ENCODE measurements at regions of chr9 and their contacts with region 1.

Region 1: DNA sequence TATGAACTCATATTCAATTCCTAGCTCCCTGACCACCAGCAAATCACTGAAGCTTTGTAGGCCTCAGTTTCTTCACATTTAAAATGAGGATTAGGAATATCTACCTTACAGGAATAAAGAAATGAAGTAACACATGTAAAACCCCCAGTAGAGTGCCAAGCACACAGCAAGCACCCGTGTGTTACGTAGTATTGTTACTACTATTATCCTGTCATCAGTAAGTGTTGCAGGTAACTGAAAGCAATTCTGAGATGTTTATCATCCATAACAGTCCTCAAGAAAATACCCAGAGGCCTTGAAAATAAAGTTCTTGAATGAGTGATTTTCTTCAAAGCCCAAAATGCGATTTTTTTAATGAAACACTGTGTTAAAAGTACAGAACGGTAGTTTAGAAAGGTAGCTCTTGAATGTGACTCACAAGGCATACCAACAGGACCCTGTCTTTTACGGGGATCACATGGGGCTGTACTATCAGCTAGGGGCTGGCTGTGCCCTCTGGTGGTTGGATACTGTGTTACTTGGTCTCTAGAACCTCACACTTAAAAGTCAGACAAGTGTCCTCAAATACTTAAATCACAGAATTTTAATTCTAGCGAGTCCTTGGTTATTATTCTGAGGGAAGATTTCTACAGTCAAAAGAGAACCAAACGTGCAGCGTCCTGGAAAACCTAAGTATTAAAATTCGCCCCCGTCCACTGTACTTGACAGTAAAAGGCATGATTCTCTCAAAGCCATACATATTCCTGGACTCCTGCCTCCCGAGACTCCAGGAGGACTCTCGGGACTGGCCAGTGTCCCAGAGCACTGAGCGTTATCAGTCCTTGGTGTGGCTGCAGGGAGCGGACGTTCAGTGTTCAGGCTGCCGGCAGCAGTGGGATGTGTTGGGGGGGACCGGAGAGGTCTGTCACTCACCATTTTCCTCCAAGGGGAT is 725 bp downstream of the NDUFB6 start:
- DNase-seq: peak; percentile 70
- ATAC-seq: peak; percentile 92
- H3K4me3 ChIP-seq: peak overlapping the region; percentile 97
- H3K27ac ChIP-seq: peak overlapping the region; percentile 55
- H3K4me1 ChIP-seq: peaks cover 17% of the 10 kb centered on the region
- H3K27me3 ChIP-seq: no peaks in the 10 kb centered on the region
- CTCF ChIP-seq: peak; percentile 77

Region 2: GRCh38 chr9:32326146-32326545 is 246.1 kb before region 1 on chr9:
- CTCF ChIA-PET with region 1: no interaction called
- POLR2A ChIA-PET with region 1: no interaction called
- intact Hi-C with region 1: no loop called
- DNase-seq: no peak
- ATAC-seq: no peak
- H3K4me3 ChIP-seq: no peak overlapping the region
- H3K27ac ChIP-seq: no peak overlapping the region
- H3K4me1 ChIP-seq: no peaks in the 10 kb centered on the region
- H3K27me3 ChIP-seq: peaks cover 24% of the 10 kb centered on the region; the same call in 1 of the 2 replicates
- CTCF ChIP-seq: no peak

Region 3: GRCh38 chr9:32431940-32432555 is 140.2 kb before region 1 on chr9:
- CTCF ChIA-PET with region 1: no interaction called
- POLR2A ChIA-PET with region 1: no interaction called
- intact Hi-C with region 1: loop called (anchors 5 kb)
- DNase-seq: peak; percentile 36
- ATAC-seq: peak; percentile 82
- H3K4me3 ChIP-seq: no peak overlapping the region
- H3K27ac ChIP-seq: no peak overlapping the region
- H3K4me1 ChIP-seq: peaks cover 25% of the 10 kb centered on the region
- H3K27me3 ChIP-seq: no peaks in the 10 kb centered on the region
- CTCF ChIP-seq: peak; percentile 63

Region 4: GRCh38 chr9:32526041-32526706 is 46.1 kb before region 1 on chr9 and contains the start of gene RIGI:
- CTCF ChIA-PET with region 1: interaction called, 11 read pairs
- POLR2A ChIA-PET with region 1: no interaction called
- intact Hi-C with region 1: loop called (anchors 2 kb)
- DNase-seq: peak; percentile 87
- ATAC-seq: peak; percentile 88
- H3K4me3 ChIP-seq: peak within 1 kb of the TSS; percentile 92
- H3K27ac ChIP-seq: peak within 1 kb of the TSS; percentile 78
- H3K4me1 ChIP-seq: peaks cover 7% of the 10 kb centered on the region; the same call in 1 of the 2 replicates
- H3K27me3 ChIP-seq: no peaks in the 10 kb centered on the region
- CTCF ChIP-seq: peak; percentile 63
- total RNA-seq, gene RIGI: 2.6 and 5.4 TPM in 2 replicates

Region 5: DNA sequence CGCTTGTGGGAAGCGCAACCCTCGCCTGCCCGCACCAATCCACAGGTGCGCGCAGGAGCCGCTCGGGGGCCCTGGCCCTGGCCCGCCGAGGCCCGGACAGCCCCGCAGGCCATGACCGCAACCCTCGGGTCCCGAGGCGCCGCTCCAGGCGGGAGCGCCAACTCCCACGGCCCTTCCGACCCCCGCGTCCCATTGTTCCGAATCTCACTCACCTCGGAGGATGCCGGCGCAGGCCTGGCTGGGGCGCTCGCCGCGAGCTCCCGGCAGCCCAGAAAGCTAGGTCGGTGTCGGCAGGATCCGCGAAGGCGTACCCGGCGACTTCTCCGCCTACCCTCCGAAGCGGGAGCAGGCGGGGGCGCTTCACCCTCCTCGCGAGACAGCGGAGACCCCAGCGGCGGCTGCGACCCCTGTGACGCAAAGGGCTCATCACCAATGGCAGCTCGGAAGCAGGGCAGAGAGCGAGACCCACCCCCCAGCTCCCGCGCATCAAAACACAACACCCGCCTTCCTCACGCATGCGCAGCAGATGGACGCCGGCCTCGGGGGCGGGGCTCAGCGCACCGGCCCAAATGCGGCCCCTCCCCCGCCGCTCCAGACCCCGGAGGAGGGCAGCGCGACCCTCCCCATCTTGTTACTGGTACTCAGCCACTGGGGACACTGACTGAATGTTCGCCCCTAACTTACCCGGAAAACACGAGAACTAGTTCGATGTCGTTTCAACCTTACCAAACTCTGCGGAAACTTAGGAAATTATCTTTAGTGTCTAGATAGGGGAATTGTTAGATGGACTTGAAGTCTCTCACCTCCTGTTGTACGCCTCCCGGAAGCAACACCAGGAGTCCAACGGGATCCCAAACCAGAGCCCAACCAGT is 21.4 kb before region 1 on chr9:
- CTCF ChIA-PET with region 1: interaction called, 4 read pairs
- POLR2A ChIA-PET with region 1: no interaction called
- intact Hi-C with region 1: loop called (anchors 1 kb)
- DNase-seq: peak; percentile 74
- ATAC-seq: peak; percentile 57
- H3K4me3 ChIP-seq: peak overlapping the region; percentile 89
- H3K27ac ChIP-seq: peak overlapping the region; percentile 76
- H3K4me1 ChIP-seq: 0 out of 2 replicates have a peak, but pooled peaks cover 9% of the 10 kb centered on the region
- H3K27me3 ChIP-seq: no peaks in the 10 kb centered on the region
- CTCF ChIP-seq: no peak

Region 6: GRCh38 chr9:32603914-32604741 is 31.9 kb after region 1 on chr9:
- CTCF ChIA-PET with region 1: no interaction called
- POLR2A ChIA-PET with region 1: no interaction called
- intact Hi-C with region 1: no loop called
- DNase-seq: peak; percentile 91
- ATAC-seq: peak; percentile 100
- H3K4me3 ChIP-seq: peak overlapping the region; percentile 54; the same call in 1 of the 2 replicates
- H3K27ac ChIP-seq: peak overlapping the region; percentile 86
- H3K4me1 ChIP-seq: peaks cover 9% of the 10 kb centered on the region
- H3K27me3 ChIP-seq: no peaks in the 10 kb centered on the region
- CTCF ChIP-seq: no peak

Measured in PC-3 (cell line).